HepG2 (cell line): ENCODE measurements at regions of chr1 and their contacts with region 1.

Region 1: GRCh38 chr1:89987170-89987819 is 7.6 kb upstream of the ZNF326 start:
- DNase-seq: peak; percentile 62
- ATAC-seq: peak; percentile 72
- H3K4me3 ChIP-seq: no peak overlapping the region
- H3K27ac ChIP-seq: no peak overlapping the region
- H3K4me1 ChIP-seq: peaks cover 36% of the 10 kb centered on the region
- H3K27me3 ChIP-seq: no peaks in the 10 kb centered on the region
- CTCF ChIP-seq: peak; percentile 87
- EP300 ChIP-seq: no peak
- POLR2A ChIP-seq: no peak
- RAD21 ChIP-seq: peak; percentile 77

Region 2: GRCh38 chr1:89780721-89781120 is 206.6 kb before region 1 on chr1:
- CTCF ChIA-PET with region 1: no interaction called
- POLR2A ChIA-PET with region 1: no interaction called
- in situ Hi-C with region 1: no loop called
- intact Hi-C with region 1: loop called (anchors 2 kb)
- DNase-seq: peak; percentile 31
- ATAC-seq: peak; percentile 62
- H3K4me3 ChIP-seq: no peak overlapping the region
- H3K27ac ChIP-seq: no peak overlapping the region
- H3K4me1 ChIP-seq: peaks cover 8% of the 10 kb centered on the region
- H3K27me3 ChIP-seq: 0 out of 5 replicates have a peak, but pooled peaks cover 0 to 2% of the 10 kb centered on the region in 2 experiments
- CTCF ChIP-seq: peak; percentile 38; the same call in 1 of the 2 replicates
- EP300 ChIP-seq: no peak
- POLR2A ChIP-seq: no peak
- RAD21 ChIP-seq: no peak

Region 3: DNA sequence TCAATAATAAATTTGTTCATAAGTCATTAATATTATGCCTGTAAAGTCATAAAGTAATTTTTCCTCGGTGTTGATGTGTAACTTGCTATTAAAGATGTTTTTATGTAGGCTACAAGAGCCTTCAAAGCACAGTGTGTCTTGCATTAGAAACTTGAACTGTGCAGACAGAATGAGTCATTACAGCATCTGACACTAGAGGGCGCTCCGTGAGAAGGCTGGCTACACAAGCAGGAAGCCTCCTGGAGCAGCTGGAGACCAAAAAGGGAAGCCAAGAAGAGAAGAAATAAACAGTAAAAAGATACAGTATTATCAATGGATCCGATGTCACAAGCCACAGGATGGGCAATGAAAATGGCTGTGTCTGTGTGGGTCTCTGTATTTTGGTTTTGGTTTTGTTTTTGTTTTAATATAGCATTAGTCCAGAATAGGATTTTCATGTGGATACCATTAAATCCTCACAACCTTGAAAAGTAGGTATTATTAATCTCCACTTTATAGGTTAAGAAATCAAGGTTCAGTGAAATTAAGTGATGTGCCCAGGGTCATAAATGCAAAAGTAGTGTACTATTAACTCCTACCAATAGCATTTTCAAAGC is 182.6 kb before region 1 on chr1:
- CTCF ChIA-PET with region 1: interaction called, 34 read pairs
- POLR2A ChIA-PET with region 1: no interaction called
- in situ Hi-C with region 1: loop called (anchors 5 kb)
- intact Hi-C with region 1: loop called (anchors 1 kb)
- DNase-seq: peak; percentile 74
- ATAC-seq: peak; percentile 90
- H3K4me3 ChIP-seq: no peak overlapping the region
- H3K27ac ChIP-seq: no peak overlapping the region
- H3K4me1 ChIP-seq: peaks cover 29% of the 10 kb centered on the region
- H3K27me3 ChIP-seq: peaks cover 0 to 8% of the 10 kb centered on the region in 2 experiments; a peak in 3 of 5 replicates
- CTCF ChIP-seq: peak; percentile 90
- EP300 ChIP-seq: no peak
- POLR2A ChIP-seq: no peak
- RAD21 ChIP-seq: peak; percentile 85

Region 4: GRCh38 chr1:89843281-89844121 is 143.8 kb before region 1 on chr1:
- CTCF ChIA-PET with region 1: interaction called, 9 read pairs
- POLR2A ChIA-PET with region 1: no interaction called
- in situ Hi-C with region 1: no loop called
- intact Hi-C with region 1: loop called (anchors 2 kb)
- DNase-seq: no peak
- ATAC-seq: peak; percentile 93
- H3K4me3 ChIP-seq: peak overlapping the region; percentile 55 to 73 (median 60)
- H3K27ac ChIP-seq: peak overlapping the region; percentile 75
- H3K4me1 ChIP-seq: peaks cover 64% of the 10 kb centered on the region
- H3K27me3 ChIP-seq: no peaks in the 10 kb centered on the region
- CTCF ChIP-seq: peak; percentile 68; the same call in 1 of the 2 replicates
- EP300 ChIP-seq: no peak
- POLR2A ChIP-seq: no peak; a peak in 1 of 4 replicates
- RAD21 ChIP-seq: peak; percentile 70

Region 5: GRCh38 chr1:89908672-89909436 is 78.4 kb before region 1 on chr1:
- CTCF ChIA-PET with region 1: no interaction called
- POLR2A ChIA-PET with region 1: no interaction called
- in situ Hi-C with region 1: no loop called
- intact Hi-C with region 1: loop called (anchors 10 kb)
- DNase-seq: no peak
- ATAC-seq: no peak
- H3K4me3 ChIP-seq: no peak overlapping the region
- H3K27ac ChIP-seq: no peak overlapping the region
- H3K4me1 ChIP-seq: peaks cover 58% of the 10 kb centered on the region
- H3K27me3 ChIP-seq: no peaks in the 10 kb centered on the region
- CTCF ChIP-seq: no peak
- EP300 ChIP-seq: no peak
- POLR2A ChIP-seq: no peak
- RAD21 ChIP-seq: no peak

Region 6: DNA sequence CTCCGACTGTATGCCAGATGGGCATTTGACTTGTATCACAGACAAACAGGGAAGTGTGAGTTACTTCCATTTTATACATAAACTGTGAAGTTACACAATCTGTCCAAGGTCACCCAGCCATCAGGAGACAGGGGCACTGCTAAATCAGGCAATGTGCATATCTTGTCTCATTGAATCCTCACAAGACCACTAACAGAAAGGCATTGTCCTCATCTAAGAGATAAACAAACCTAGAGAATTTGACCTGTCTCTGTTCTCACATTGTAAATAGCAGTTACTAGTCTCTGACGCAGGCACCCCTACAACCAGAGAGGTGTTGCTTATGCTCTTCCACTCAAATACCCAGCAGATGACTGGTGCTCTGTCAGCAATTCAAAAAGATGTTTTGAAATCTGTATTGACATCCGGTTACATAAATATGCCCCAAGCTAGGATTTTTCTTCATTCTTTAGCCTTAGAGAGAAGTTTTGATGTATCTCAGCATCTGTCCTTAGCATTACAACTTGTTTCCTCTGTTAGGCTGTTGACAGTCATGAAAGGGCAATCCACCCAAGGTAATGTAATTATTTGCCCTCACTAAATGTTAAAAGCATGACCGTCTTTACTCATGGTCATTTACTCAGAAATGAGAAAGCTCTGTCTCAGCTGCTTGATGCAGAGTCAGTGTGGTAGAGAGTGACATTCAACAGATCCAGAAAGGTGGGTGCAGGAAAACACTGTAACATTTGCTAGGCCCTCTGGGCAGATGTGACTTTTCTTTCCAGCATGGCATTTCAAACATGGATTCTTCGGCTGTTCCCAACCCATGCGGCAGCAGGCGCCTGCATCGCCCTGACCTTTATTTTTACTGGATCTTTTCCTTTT is 44.2 kb before region 1 on chr1:
- CTCF ChIA-PET with region 1: no interaction called
- POLR2A ChIA-PET with region 1: no interaction called
- in situ Hi-C with region 1: no loop called
- intact Hi-C with region 1: loop called (anchors 2 kb)
- DNase-seq: peak; percentile 96
- ATAC-seq: peak; percentile 87
- H3K4me3 ChIP-seq: peak overlapping the region in 1 of 3 experiments; percentile 17; a peak in 1 of 6 replicates
- H3K27ac ChIP-seq: peak overlapping the region; percentile 80
- H3K4me1 ChIP-seq: peaks cover 74% of the 10 kb centered on the region
- H3K27me3 ChIP-seq: no peaks in the 10 kb centered on the region
- CTCF ChIP-seq: no peak
- EP300 ChIP-seq: peak in 1 of 2 experiments; percentile 43; a peak in 2 of 4 replicates
- POLR2A ChIP-seq: no peak
- RAD21 ChIP-seq: no peak

Region 7: DNA sequence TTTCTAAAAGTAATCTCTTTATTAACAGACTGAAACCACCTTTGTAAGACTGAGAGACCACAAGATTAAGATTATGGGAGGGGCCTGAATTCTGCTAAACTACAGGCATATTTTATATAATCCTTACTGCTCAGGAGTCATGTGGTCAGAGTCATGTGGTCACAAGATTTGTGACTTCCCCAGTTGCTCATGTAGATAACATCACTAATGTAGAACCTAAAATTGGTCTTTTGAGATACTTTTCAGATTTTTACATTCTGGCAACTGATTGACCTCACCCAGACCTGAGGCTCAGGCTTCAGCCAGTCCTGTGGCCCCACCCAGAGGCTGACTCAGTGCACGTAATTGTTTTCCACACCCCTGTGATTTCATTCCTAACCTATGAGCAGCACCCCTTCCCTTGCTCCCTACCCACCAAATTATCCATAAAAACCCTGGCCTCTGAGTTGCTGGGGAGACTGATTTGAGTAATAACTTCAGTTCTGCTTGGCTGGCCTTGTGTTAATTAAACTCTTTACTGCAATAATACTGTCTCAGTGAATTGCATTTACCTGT is 34.1 kb before region 1 on chr1:
- CTCF ChIA-PET with region 1: no interaction called
- POLR2A ChIA-PET with region 1: no interaction called
- in situ Hi-C with region 1: no loop called
- intact Hi-C with region 1: no loop called
- DNase-seq: peak; percentile 49
- ATAC-seq: peak; percentile 74
- H3K4me3 ChIP-seq: no peak overlapping the region
- H3K27ac ChIP-seq: no peak overlapping the region
- H3K4me1 ChIP-seq: peaks cover 87% of the 10 kb centered on the region
- H3K27me3 ChIP-seq: no peaks in the 10 kb centered on the region
- CTCF ChIP-seq: peak; percentile 76
- EP300 ChIP-seq: no peak
- POLR2A ChIP-seq: no peak
- RAD21 ChIP-seq: peak; percentile 56; the same call in 1 of the 2 replicates

Region 8: DNA sequence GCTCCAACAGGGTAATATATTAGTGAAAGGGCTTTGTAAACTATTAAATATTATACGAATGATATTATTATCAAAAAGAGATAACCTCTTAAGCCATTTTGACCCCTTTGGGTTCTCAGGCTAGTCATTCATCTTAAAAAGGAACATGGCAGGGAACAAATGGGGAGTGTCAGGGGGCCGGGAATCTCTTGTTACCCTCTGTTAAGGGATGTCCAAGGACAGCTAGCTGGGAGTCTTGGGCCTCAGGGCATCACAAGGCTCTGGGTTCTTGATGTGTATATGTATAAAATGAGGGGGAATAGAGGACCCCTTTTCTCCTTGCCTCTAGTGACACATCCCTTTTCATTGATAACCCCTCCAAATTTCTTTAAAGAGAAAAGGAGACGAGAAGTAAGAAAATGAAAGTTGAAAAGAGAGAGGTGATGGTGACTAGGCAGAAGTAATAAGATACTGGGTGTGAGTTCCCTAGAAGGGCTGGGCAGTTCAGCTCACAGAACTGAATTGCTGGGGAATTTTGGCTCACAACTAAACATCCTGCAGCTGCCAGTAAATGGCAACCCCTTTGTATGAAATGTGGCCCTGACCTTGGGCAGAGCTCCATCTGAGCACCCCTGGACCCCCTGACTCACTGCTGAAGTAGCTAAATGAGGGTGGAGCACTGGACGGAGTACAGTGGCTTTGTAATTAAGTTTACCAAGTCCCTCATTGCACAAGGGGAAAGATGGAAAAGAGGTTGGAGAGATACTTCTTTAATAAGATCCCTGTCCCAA is 12.4 kb before region 1 on chr1:
- CTCF ChIA-PET with region 1: no interaction called
- POLR2A ChIA-PET with region 1: no interaction called
- in situ Hi-C with region 1: no loop called
- intact Hi-C with region 1: no loop called
- DNase-seq: peak; percentile 28
- ATAC-seq: peak; percentile 41; the same call in 2 of the 3 replicates
- H3K4me3 ChIP-seq: no peak overlapping the region
- H3K27ac ChIP-seq: no peak overlapping the region
- H3K4me1 ChIP-seq: peaks cover 11% of the 10 kb centered on the region
- H3K27me3 ChIP-seq: no peaks in the 10 kb centered on the region; a peak in 1 of 5 replicates
- CTCF ChIP-seq: no peak
- EP300 ChIP-seq: no peak
- POLR2A ChIP-seq: no peak
- RAD21 ChIP-seq: no peak